ENCODE measurements at regions of chr18 and their contacts with region 1.

Region 1: DNA sequence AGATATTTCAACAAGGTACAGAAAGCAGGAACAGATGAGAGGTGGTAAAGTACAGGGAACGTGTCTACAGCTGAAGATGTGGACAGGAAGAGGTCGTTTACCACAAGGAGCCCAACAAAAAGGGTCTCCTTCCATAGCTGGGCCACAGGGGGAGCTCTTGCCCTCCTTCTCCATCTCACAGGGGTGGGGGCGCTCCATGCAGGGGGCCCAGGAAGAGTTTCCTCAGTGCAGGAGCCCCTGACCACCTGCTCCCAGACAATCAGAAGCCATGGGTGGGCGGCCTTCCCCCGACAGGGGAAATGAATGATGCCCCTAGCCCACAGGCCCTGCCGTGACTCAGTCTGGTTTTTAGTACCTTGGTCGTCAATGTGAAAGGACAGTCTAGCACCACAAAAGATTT is 163.6 kb upstream of the ZNF516 start:
- DNase-seq: peak; percentile 83
- ATAC-seq: peak; percentile 94
- H3K4me3 Mint-ChIP-seq: no peak overlapping the region
- H3K27ac Mint-ChIP-seq: no peak overlapping the region
- H3K4me1 Mint-ChIP-seq: peaks cover 15% of the 10 kb centered on the region
- H3K27me3 Mint-ChIP-seq: no peaks in the 10 kb centered on the region
- CTCF ChIP-seq: peak; percentile 63

Region 2: GRCh38 chr18:76518123-76518859 is 140.3 kb before region 1 on chr18:
- CTCF ChIA-PET with region 1: interaction called, 15 read pairs
- POLR2A ChIA-PET with region 1: no interaction called
- DNase-seq: peak; percentile 74
- ATAC-seq: peak; percentile 82
- H3K4me3 Mint-ChIP-seq: peak overlapping the region; percentile 74
- H3K27ac Mint-ChIP-seq: peak overlapping the region; percentile 90
- H3K4me1 Mint-ChIP-seq: peaks cover 52% of the 10 kb centered on the region
- H3K27me3 Mint-ChIP-seq: no peaks in the 10 kb centered on the region; the same call in 1 of the 2 replicates
- CTCF ChIP-seq: no peak

Region 3: DNA sequence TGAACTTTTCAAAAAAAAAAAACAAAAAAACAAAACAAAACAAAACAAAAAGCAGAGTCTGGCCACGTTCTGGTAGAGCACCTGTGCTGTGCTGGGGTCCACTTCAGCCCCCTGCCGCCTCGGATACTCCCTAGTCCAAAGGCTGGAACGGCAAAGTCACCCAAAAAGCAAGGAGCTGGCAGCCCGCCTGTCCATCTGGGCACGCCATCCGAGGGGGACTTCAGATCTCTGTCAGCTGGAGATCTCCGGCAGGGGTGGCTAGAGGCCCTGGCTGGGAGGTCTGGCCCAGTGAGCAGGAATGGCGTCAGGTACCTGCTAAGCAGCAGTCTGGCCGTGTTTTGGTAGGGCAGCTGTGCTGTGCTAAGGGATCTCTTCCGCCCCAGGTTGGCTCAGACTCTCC is 11.3 kb before region 1 on chr18:
- CTCF ChIA-PET with region 1: interaction called, 19 read pairs
- POLR2A ChIA-PET with region 1: no interaction called
- DNase-seq: no peak
- ATAC-seq: no peak; the same call in 1 of the 2 replicates
- H3K4me3 Mint-ChIP-seq: no peak overlapping the region
- H3K27ac Mint-ChIP-seq: no peak overlapping the region
- H3K4me1 Mint-ChIP-seq: no peaks in the 10 kb centered on the region
- H3K27me3 Mint-ChIP-seq: no peaks in the 10 kb centered on the region
- CTCF ChIP-seq: no peak

Region 4: DNA sequence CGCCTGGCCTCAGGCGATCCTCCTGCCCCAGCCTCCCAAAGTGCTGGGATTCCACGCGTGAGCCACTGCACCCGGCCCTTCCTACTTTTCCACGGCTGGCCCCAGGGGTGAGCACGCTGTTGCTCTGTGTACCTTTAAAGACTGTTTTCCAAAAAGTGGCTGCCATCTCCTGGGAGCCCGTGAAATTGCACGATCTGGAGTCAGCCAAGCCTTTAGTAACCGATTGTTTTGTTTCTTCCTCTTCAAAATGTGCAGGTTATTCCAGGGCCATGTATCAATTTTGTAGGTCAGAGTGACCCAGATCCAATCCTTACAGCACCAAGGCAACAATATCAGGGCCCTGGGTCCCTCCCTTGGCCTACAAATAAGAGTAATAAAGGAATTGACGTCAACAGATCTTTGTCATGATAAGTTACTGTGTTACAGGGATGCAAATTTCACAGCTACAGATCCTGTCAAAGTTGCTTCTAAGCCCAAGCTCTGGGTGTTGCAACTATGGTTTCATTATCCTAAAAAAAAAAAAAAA is 28.2 kb after region 1 on chr18:
- CTCF ChIA-PET with region 1: interaction called, 32 read pairs
- POLR2A ChIA-PET with region 1: no interaction called
- DNase-seq: peak; percentile 63
- ATAC-seq: peak; percentile 88
- H3K4me3 Mint-ChIP-seq: peak overlapping the region; percentile 26; the same call in 1 of the 2 replicates
- H3K27ac Mint-ChIP-seq: peak overlapping the region; percentile 93
- H3K4me1 Mint-ChIP-seq: peaks cover 19% of the 10 kb centered on the region
- H3K27me3 Mint-ChIP-seq: no peaks in the 10 kb centered on the region
- CTCF ChIP-seq: no peak

Region 5: DNA sequence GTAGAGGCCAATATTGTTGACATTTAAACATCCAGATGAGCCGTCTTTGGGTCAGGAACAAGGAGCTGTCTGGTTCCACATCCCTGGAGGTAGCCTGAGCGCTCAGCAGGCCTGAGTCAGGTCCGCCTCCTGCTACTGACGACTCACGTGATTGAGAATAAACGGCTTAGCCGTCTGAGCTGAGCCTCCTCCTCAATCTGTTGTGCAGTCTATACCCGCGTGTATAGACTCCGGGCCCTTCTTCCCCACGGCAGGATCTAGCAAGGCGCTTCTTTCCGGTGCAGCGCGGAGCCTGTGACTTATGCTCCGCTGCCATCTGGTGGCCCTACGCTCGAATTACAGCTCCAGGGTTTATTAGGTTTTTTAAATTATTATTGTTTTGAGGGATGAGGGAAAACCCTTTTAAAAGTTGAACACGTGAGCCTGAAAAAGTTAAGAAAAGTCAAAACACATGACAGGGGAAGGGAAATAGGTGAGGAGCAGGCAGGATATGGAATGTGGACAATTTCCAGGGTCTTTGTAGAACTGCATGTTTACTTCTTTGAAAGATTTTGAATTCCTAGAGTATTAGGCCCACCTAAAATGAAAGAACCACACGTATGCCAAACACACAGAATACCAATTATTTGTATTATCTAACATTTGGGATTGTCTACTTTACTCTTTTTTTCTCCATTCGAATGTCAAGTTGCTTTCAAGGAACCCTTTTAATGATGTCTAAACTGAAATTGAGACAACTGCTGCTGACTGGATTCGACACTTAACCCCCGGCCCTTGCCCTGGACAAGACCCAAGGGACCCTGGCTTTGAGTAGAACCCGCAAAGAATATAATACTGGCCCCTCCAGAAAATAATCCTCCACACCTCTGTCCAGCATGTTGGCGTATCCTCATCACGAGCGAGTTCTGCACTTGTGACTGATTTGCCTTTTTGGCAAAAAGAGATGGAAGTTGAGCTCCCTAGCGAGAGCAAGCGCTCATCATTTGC is 51.3 kb after region 1 on chr18:
- CTCF ChIA-PET with region 1: interaction called, 23 read pairs
- POLR2A ChIA-PET with region 1: no interaction called
- DNase-seq: peak; percentile 68
- ATAC-seq: peak; percentile 92
- H3K4me3 Mint-ChIP-seq: 0 out of 2 replicates have a peak overlapping the region, but pooled peaks have one; percentile 19
- H3K27ac Mint-ChIP-seq: no peak overlapping the region
- H3K4me1 Mint-ChIP-seq: peaks cover 11% of the 10 kb centered on the region; the same call in 1 of the 2 replicates
- H3K27me3 Mint-ChIP-seq: no peaks in the 10 kb centered on the region; the same call in 1 of the 2 replicates
- CTCF ChIP-seq: peak; percentile 80

Region 6: GRCh38 chr18:76903386-76903785 is 244.8 kb after region 1 on chr18:
- CTCF ChIA-PET with region 1: no interaction called
- POLR2A ChIA-PET with region 1: no interaction called
- DNase-seq: no peak
- ATAC-seq: no peak
- H3K4me3 Mint-ChIP-seq: no peak overlapping the region
- H3K27ac Mint-ChIP-seq: peak overlapping the region; percentile 42; the same call in 1 of the 2 replicates
- H3K4me1 Mint-ChIP-seq: no peaks in the 10 kb centered on the region
- H3K27me3 Mint-ChIP-seq: no peaks in the 10 kb centered on the region
- CTCF ChIP-seq: no peak

Region 7: DNA sequence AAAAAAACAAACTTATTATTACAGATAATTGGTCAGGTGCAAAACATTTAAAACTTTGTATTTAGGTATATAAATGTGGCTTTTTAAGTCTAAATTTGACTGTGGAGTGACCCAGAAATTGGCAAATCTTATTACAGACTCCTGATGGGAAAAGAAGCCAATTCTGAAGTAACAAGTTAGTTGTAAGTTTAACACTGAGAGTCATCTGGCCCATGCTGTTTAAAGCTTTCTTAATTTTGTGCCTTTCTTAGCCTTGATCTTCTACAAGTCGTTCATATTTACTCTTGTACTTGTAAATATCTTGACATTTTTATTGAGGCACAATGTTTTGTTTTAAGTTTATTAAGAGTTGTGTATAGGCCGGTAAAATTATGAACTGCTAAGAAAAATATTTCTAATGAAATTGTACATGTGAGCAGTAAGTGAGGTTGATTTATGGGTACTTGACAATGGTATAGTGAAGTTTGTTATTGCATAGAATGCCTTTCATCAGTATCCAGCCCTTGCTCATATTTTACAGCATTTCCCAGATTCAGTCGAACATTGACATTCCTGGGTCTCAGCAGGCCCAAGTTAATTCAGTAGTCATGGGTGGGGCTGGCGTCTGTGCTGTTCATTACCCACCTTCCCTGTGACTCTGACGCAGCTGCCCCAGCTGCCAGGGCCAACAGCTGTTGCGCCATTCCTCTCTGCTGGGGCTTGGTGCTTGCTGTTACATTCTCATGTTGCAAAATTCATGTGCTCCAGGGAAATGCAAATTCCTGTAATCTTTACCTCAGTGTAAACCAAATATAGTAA is 285.1 kb after region 1 on chr18:
- CTCF ChIA-PET with region 1: no interaction called
- POLR2A ChIA-PET with region 1: no interaction called
- DNase-seq: no peak
- ATAC-seq: no peak
- H3K4me3 Mint-ChIP-seq: no peak overlapping the region
- H3K27ac Mint-ChIP-seq: no peak overlapping the region
- H3K4me1 Mint-ChIP-seq: no peaks in the 10 kb centered on the region
- H3K27me3 Mint-ChIP-seq: no peaks in the 10 kb centered on the region
- CTCF ChIP-seq: no peak